ENCODE measurements at regions of chr1 and their contacts with region 1.

Region 1: GRCh38 chr1:180863158-180863775 is 49.4 kb upstream of the KIAA1614 start:
- DNase-seq: peak; percentile 30 to 50
- ATAC-seq: peak in 1 of 2 experiments; percentile 63; a peak in 3 of 6 replicates
- H3K4me3 ChIP-seq: no peak overlapping the region
- H3K27ac ChIP-seq: peak overlapping the region in 1 of 2 experiments; percentile 8; a peak in 1 of 6 replicates
- H3K4me1 ChIP-seq: peaks cover 12% of the 10 kb centered on the region; the same call in 2 of the 3 replicates
- CTCF ChIP-seq: peak; percentile 90
- EP300 ChIP-seq: no peak
- POLR2A ChIP-seq: no peak
- RAD21 ChIP-seq: peak; percentile 91 to 94

Region 2: GRCh38 chr1:180502360-180503273 is 360.6 kb before region 1 on chr1 and contains the start of gene ACBD6:
- CTCF ChIA-PET with region 1: interaction called, 11 read pairs
- POLR2A ChIA-PET with region 1: interaction called, 3 read pairs
- DNase-seq: peak; percentile 88 to 94
- ATAC-seq: peak; percentile 90 to 95
- H3K4me3 ChIP-seq: peak within 1 kb of the TSS; percentile 91
- H3K27ac ChIP-seq: peak within 1 kb of the TSS; percentile 94 to 98
- H3K4me1 ChIP-seq: peaks cover 36% of the 10 kb centered on the region; the same call in 2 of the 3 replicates
- CTCF ChIP-seq: no peak
- EP300 ChIP-seq: no peak
- POLR2A ChIP-seq: peak; percentile 80
- RAD21 ChIP-seq: no peak
- polyA plus RNA-seq, gene ACBD6: 78.7 and 91.3 TPM in 2 replicates

Region 3: DNA sequence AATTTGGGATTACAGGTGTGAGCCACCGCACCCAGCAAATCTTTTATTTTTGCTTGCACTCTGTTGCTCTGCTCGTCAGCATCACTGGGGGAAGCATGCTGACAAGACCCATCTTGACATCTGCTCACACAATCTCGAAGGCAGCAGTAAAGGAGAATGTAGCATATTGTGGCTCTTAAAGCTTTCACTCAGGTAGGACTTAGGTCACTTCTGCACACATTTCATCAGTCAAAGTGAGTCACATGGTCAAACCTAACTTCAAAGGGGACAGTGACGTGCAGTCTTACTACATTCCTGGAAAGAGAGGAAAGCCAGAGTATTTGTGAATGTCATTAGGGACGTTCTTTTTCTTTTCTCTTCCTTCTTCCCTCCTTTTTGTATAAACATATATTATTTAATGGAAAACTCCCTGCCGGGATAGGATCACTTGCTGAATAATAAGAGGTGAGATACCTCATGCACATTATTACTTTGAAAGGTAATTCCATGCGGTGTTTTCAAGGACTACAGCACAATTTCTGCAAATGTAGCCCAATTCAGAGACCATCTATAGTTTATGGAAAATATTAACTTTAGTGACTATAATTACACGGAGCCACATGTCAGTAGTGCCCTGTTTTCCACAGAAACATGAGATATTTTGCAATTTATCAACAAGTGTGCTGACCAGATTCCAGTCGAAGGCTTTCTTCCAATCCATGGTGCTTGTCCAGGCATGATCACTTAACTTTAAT is 341.6 kb before region 1 on chr1:
- CTCF ChIA-PET with region 1: interaction called, 145 read pairs
- POLR2A ChIA-PET with region 1: interaction called, 3 read pairs
- DNase-seq: peak in 1 of 2 experiments; percentile 48
- ATAC-seq: peak; percentile 40 to 63; a peak in 4 of 6 replicates
- H3K4me3 ChIP-seq: no peak overlapping the region
- H3K27ac ChIP-seq: peak overlapping the region; percentile 56 to 71
- H3K4me1 ChIP-seq: peaks cover 15% of the 10 kb centered on the region
- CTCF ChIP-seq: no peak
- EP300 ChIP-seq: no peak
- POLR2A ChIP-seq: no peak
- RAD21 ChIP-seq: no peak

Region 4: DNA sequence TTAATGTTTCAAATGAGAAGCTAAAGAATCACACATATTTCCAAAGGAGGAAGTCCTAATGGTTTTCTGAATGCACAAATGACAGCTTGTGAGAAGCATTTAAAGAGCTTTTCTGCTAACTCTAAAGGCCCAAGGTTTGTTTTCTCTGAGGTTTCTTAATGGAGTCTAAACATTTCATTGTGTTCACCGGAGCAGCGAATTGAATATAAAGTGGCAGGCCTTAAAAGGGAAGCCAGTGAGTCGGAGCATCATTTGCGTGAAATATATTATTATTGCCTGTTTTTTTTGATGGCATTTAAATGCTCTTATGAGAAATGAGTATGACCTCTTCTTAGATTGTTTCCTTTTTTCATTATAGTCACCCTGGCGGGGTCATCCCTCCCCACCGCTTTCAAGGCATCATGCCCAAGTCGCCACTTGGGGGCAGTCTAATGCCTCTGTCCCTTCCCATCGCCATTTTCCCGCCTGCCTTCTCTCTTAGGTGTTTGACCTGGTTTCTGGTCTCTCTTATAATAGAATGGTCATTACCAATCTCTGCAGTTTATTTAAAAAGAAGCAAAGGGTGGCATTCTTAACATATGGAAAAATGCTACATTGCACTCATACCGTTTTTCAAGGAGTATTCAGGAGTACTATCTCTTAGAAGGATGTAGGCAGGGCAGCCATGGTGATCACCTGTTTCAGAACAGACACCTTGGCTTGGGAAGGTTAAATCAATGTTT is 329.8 kb before region 1 on chr1:
- CTCF ChIA-PET with region 1: interaction called, 47 read pairs
- POLR2A ChIA-PET with region 1: no interaction called
- DNase-seq: peak; percentile 69 to 72
- ATAC-seq: peak; percentile 90 to 93
- H3K4me3 ChIP-seq: no peak overlapping the region
- H3K27ac ChIP-seq: peak overlapping the region; percentile 16 to 55; a peak in 4 of 6 replicates
- H3K4me1 ChIP-seq: peaks cover 11% of the 10 kb centered on the region
- CTCF ChIP-seq: peak; percentile 95
- EP300 ChIP-seq: no peak
- POLR2A ChIP-seq: no peak
- RAD21 ChIP-seq: peak; percentile 97 to 98

Region 5: DNA sequence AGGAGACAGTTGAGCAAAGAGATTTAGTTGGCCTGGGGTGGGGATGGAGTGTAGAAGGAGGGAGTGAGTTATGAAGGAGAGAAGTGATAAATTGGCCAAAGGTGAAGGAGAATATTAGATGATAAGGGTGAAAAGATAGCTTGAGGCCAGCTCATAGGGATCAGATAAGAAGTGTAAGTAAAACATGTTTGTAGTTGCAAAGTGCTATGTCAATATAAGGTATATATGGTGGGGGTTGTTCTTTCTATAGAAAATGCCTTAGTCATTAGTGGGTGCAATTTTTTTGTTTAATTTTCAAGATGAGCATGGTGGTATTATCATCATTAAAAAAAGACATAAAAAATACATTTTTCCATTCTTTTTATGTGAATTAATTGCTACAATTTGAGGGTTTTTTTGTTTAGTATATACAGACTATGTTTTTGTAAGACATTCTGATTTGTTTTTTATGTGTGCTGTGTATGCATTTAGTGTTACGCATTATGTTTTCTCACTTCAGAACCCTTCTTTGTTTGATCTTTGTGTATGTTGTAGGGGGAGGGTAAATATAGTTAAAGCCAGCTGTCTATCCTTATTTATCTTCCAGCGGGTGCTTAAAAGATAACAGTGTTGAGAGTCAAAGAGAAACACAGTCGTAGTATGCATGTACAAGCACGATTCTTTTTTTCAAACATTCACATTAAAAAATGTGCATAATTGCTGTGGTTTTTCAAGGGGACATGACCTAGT is 48.2 kb before region 1 on chr1:
- CTCF ChIA-PET with region 1: no interaction called
- POLR2A ChIA-PET with region 1: no interaction called
- DNase-seq: no peak
- ATAC-seq: no peak
- H3K4me3 ChIP-seq: no peak overlapping the region
- H3K27ac ChIP-seq: no peak overlapping the region
- H3K4me1 ChIP-seq: no peaks in the 10 kb centered on the region
- CTCF ChIP-seq: no peak
- EP300 ChIP-seq: no peak
- POLR2A ChIP-seq: no peak
- RAD21 ChIP-seq: no peak

Region 6: DNA sequence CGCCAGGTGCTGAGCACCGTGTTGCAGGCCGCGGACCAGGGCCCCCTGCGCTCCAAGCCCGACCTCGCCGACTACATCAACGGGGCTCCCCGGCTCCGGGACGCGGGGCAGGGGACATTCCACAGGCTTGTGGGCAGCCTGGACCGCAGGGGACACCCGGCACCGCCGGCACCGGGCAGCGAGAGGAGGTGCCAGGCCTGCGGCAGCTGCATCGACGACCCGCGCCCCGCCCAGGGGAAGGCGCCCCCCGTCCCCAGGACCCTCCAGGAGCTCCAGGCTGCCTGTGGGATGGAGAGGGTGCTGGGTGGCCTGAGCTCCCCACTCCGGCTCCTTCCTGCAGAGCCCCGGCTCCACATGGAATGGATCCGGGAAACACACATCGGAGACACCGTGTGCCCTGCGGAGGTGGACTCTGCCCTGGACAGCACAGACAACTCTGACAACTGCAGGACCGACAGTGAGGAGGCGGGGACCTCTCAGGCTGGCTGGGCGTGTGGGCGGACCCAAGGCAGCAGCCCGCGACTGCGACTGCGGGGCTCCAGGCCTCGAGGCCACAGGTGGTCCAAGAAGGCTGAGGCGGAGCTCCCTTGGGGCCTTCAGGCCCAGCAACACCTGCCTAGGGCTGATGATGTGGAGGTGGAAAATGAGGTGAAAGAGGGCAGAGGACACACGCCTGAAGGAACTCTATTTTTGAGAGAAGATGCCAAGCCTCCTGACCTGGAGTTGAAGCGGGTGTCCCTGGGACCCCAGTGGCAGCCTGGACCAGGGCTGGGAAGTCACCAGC is 72.3 kb after region 1 on chr1:
- CTCF ChIA-PET with region 1: no interaction called
- POLR2A ChIA-PET with region 1: no interaction called
- DNase-seq: no peak
- ATAC-seq: no peak
- H3K4me3 ChIP-seq: no peak overlapping the region
- H3K27ac ChIP-seq: no peak overlapping the region
- H3K4me1 ChIP-seq: no peaks in the 10 kb centered on the region
- CTCF ChIP-seq: no peak
- EP300 ChIP-seq: no peak
- POLR2A ChIP-seq: no peak
- RAD21 ChIP-seq: no peak